PC-9 (cell line): ENCODE measurements at regions of chr5 and their contacts with region 1.

Region 1: GRCh38 chr5:100746730-100747129 is 156.4 kb downstream of the ST8SIA4 start:
- DNase-seq: no peak
- H3K4me3 ChIP-seq: no peak overlapping the region
- H3K27ac ChIP-seq: no peak overlapping the region
- H3K4me1 ChIP-seq: no peaks in the 10 kb centered on the region
- H3K27me3 ChIP-seq: no peaks in the 10 kb centered on the region
- CTCF ChIP-seq: no peak

Region 2: DNA sequence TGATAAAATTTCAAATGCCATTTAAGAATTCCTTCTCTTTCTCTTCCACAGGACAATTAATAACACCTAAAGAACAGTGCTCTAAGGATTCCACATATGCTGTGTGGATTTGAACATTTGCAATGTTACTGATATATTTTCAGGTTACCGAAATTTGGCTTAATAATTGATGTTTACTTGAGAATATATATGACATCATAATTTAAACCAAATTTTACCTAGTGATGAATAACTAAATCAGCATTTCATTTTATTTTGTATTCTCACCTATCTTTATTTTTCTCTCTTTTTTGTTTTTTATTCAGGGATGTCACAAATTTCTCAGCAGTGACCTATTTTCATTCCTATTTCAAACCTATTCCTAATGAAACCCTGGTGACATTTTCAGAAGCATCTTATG is 1119.7 kb after region 1 on chr5:
- CTCF ChIA-PET with region 1: no interaction called
- POLR2A ChIA-PET with region 1: no interaction called
- intact Hi-C with region 1: no loop called
- DNase-seq: no peak
- H3K4me3 ChIP-seq: no peak overlapping the region
- H3K27ac ChIP-seq: no peak overlapping the region
- H3K4me1 ChIP-seq: no peaks in the 10 kb centered on the region
- H3K27me3 ChIP-seq: no peaks in the 10 kb centered on the region
- CTCF ChIP-seq: no peak

Region 3: GRCh38 chr5:101955891-101956290 is 1209.2 kb after region 1 on chr5:
- CTCF ChIA-PET with region 1: no interaction called
- POLR2A ChIA-PET with region 1: no interaction called
- intact Hi-C with region 1: loop called (anchors 5 kb)
- DNase-seq: no peak
- H3K4me3 ChIP-seq: no peak overlapping the region
- H3K27ac ChIP-seq: no peak overlapping the region
- H3K4me1 ChIP-seq: no peaks in the 10 kb centered on the region
- H3K27me3 ChIP-seq: no peaks in the 10 kb centered on the region
- CTCF ChIP-seq: no peak